GM12878 (cell line): ENCODE measurements at regions of chr5 and their contacts with region 1.

Region 1: DNA sequence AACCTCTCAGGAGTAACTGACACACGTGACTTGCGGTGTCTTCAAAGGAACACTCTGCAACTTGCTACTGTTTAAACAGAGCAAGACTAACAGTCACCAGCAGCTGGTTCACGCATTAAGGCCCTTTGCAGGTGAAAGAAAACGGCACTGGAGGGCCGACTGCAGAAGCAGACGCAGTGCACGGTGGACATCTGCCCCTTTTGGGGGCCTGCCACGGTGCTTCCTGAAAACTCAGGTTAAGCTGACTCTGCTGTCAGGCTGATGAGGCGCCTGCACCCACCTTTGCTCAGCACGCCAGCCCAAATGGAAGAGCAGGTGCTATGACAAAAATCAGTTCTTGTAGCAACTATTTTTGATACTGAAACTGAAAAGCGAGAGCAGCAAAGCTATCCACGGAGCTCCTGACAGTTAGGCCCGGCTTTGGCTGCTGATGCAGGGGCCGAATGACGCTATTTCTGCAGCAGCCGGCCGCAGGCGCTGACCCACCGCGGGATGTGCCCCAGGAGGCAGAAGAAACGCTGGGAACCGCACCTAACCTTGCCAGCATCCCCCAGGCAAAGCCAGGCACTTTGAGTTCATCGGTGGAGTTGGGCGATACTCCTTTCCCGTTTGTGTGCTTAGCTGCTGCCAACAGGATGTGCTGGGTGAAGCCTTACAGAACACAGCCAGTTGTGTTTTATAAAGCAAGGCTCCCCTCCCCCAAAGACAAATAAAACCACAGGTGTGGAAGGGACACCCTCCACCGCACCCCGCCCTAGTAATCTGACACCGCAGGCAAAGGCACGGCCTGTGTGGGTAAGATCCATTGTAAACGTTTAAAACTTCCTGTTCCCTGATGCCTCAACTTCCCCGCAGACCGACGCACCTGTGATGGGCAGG is 21.1 kb upstream of the TERT start:
- DNase-seq: peak; percentile 69
- ATAC-seq: peak; percentile 66
- H3K4me3 ChIP-seq: peak overlapping the region; percentile 40; the same call in 1 of the 2 replicates
- H3K27ac ChIP-seq: peak overlapping the region; percentile 79
- H3K4me1 ChIP-seq: peaks cover 50% of the 10 kb centered on the region
- H3K27me3 ChIP-seq: no peaks in the 10 kb centered on the region
- CTCF ChIP-seq: no peak
- EP300 ChIP-seq: peak; percentile 68 to 97; a peak in 3 of 4 replicates
- POLR2A ChIP-seq: peak; percentile 71; the same call in 1 of the 2 replicates
- RAD21 ChIP-seq: 0 out of 2 replicates have a peak, but pooled peaks have one; percentile 12

Region 2: GRCh38 chr5:1125030-1125357 is 191.0 kb before region 1 on chr5:
- CTCF ChIA-PET with region 1: no interaction called
- POLR2A ChIA-PET with region 1: no interaction called
- RAD21 ChIA-PET with region 1: no interaction called
- SMC1A ChIA-PET with region 1: no interaction called
- in situ Hi-C with region 1: no loop called
- intact Hi-C with region 1: no loop called
- DNase-seq: no peak
- ATAC-seq: no peak
- H3K4me3 ChIP-seq: no peak overlapping the region
- H3K27ac ChIP-seq: no peak overlapping the region
- H3K4me1 ChIP-seq: no peaks in the 10 kb centered on the region
- H3K27me3 ChIP-seq: no peaks in the 10 kb centered on the region; a peak in 1 of 4 replicates
- CTCF ChIP-seq: no peak
- EP300 ChIP-seq: no peak
- POLR2A ChIP-seq: no peak
- RAD21 ChIP-seq: no peak

Region 3: DNA sequence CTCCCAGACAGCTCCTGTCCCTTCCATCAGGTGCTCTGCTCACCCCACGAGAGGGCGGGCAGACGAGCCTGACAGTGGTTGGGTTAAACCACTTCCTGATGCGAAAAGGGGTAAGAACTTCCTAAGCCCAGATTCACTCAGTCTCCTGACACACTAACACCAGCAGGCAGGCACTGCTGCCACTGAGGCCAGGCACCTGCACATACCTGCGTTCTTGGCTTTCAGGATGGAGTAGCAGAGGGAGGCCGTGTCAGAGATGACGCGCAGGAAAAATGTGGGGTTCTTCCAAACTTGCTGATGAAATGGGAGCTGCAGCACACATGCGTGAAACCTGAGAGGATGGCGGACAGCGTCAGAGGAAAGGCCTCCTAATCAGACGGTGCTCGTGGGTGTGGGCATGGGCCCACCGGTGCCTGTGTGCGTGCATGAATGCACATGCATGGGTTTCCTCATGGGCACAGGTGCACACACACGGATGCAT is 60.8 kb before region 1 on chr5:
- CTCF ChIA-PET with region 1: no interaction called
- POLR2A ChIA-PET with region 1: no interaction called
- RAD21 ChIA-PET with region 1: no interaction called
- SMC1A ChIA-PET with region 1: no interaction called
- in situ Hi-C with region 1: no loop called
- intact Hi-C with region 1: loop called (anchors 5 kb)
- DNase-seq: no peak
- ATAC-seq: peak; percentile 64
- H3K4me3 ChIP-seq: no peak overlapping the region
- H3K27ac ChIP-seq: no peak overlapping the region
- H3K4me1 ChIP-seq: no peaks in the 10 kb centered on the region
- H3K27me3 ChIP-seq: no peaks in the 10 kb centered on the region
- CTCF ChIP-seq: no peak
- EP300 ChIP-seq: no peak
- POLR2A ChIP-seq: no peak; the same call in 1 of the 2 replicates
- RAD21 ChIP-seq: no peak

Region 4: GRCh38 chr5:1294835-1295649 is 20.9 kb before region 1 on chr5 and contains the start of gene TERT:
- CTCF ChIA-PET with region 1: interaction called, 8 read pairs
- POLR2A ChIA-PET with region 1: interaction called, 14 read pairs
- RAD21 ChIA-PET with region 1: interaction called, 7 read pairs
- SMC1A ChIA-PET with region 1: interaction called, 18 read pairs
- in situ Hi-C with region 1: no loop called
- intact Hi-C with region 1: loop called (anchors 1 kb)
- DNase-seq: no peak
- ATAC-seq: peak; percentile 83
- H3K4me3 ChIP-seq: no peak within 1 kb of the TSS
- H3K27ac ChIP-seq: no peak within 1 kb of the TSS
- H3K4me1 ChIP-seq: no peaks in the 10 kb centered on the region
- H3K27me3 ChIP-seq: no peaks in the 10 kb centered on the region; a peak in 1 of 4 replicates
- CTCF ChIP-seq: no peak
- EP300 ChIP-seq: no peak
- POLR2A ChIP-seq: no peak
- RAD21 ChIP-seq: no peak
- polyA plus RNA-seq, gene TERT: 0.08 to 0.55 TPM

Region 5: GRCh38 chr5:1344975-1345838 is 29.3 kb after region 1 on chr5 and contains the start of gene CLPTM1L:
- CTCF ChIA-PET with region 1: interaction called, 4 read pairs
- POLR2A ChIA-PET with region 1: interaction called, 11 read pairs
- RAD21 ChIA-PET with region 1: interaction called, 3 read pairs
- SMC1A ChIA-PET with region 1: interaction called, 6 read pairs
- in situ Hi-C with region 1: no loop called
- intact Hi-C with region 1: no loop called
- DNase-seq: peak; percentile 50
- ATAC-seq: peak; percentile 79
- H3K4me3 ChIP-seq: peak within 1 kb of the TSS; percentile 98
- H3K27ac ChIP-seq: peak within 1 kb of the TSS; percentile 68
- H3K4me1 ChIP-seq: peaks cover 28% of the 10 kb centered on the region
- H3K27me3 ChIP-seq: no peaks in the 10 kb centered on the region
- CTCF ChIP-seq: no peak
- EP300 ChIP-seq: no peak
- POLR2A ChIP-seq: peak; percentile 87
- RAD21 ChIP-seq: no peak
- polyA plus RNA-seq, gene CLPTM1L: 2.9 to 22.8 TPM